ENCODE measurements at regions of chr6 and their contacts with region 1.

Region 1: GRCh38 chr6:111873178-111874024 is at the start of gene FYN:
- DNase-seq: peak; percentile 99
- total RNA-seq, gene FYN: 87.0 to 94.7 TPM

Region 2: DNA sequence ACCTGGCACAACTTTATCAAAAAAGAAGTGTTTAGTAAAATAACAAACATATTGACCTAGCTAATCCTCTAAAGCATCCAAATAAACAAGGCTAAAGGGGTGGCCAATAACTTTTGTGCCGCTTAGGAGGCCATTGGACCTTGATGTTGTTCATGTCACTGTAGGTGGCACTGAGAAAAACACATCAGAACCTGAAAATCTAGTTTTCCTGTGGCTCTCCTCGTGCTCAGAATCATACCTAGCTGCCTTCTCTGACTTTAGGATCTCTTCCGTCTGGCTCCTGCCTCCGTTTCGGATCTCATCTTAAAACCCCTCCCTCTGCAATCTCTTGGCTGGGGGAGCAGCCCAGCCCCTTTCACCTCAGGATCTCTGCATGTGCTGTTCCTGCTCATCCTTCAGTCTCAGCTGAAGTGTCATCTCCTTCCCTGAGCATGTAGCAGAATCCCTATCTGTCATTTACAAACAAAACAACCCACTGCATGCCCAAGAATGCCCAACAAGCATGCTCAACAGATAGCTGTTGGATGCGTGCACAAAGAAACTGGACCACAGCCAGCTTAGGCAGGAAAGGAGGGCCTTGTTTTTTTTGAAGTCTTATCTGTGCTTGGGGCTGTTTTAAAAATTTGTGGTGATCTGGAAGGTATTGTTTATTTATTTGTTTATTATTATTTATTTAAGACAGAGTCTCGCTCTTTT is 804.7 kb before region 1 on chr6:
- intact Hi-C with region 1: no loop called
- DNase-seq: no peak

Region 3: GRCh38 chr6:111129013-111129412 is 744.4 kb before region 1 on chr6:
- intact Hi-C with region 1: no loop called
- DNase-seq: no peak

Region 4: DNA sequence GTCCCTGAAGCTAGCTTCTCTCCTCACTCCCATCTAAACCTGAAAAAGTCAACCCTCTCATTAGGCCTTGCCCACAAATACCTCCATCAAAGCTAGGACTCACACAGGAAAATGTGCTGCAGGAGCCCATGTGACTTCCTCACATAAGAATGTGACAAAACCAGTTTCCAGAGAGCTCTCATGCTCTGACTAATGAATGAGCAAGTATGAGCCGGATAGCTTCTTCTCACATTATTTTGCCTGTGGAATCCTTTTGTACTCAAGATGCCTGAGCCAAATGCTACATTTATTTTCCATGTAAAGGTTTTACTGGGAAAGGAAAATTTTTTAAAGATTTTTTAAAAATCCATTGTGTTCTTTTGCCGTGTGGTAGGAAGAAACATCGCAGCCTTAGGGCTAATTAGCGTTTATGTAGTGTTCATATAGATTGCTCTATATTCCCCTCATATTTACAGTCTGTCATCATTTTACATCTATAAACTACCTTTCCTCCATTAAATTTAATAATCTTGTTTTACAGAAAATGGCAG is 111.9 kb after region 1 on chr6:
- intact Hi-C with region 1: loop called in 1 of 2 experiments (anchors 10 kb)
- DNase-seq: no peak

Region 5: DNA sequence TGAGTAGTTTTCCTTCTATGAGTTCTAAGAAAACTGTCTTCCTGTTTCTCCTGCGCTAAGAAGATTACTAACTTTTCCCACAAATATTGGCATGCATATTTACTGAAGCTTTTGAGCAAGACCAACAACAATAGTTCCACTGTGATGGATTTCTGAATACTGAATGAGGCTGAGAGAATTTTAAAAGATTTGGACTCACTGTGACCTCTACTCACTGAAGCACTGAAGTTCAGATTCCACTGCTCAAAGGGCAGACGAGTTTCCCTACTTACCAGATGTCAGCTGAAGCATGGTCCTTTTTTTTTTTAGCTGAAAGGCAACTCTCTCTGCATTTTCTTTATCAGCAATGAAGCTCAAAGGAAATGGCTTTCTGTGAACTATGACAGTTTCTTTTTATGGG is 1192.2 kb after region 1 on chr6:
- intact Hi-C with region 1: no loop called
- DNase-seq: no peak